Common myeloid progenitor, CD34-positive (primary cell): ENCODE measurements at regions of chr17 and their contacts with region 1.

Region 1: GRCh38 chr17:55273579-55274354 is 9.0 kb downstream of the HLF start:
- DNase-seq: peak in 1 of 3 donors; percentile 45
- H3K4me3 ChIP-seq: peak overlapping the region in 2 of 7 experiments; percentile 2 to 41
- H3K27ac ChIP-seq: no peak overlapping the region
- H3K4me1 ChIP-seq: peaks cover 3 to 88% (median 40%) of the 10 kb centered on the region in 4 experiments
- H3K27me3 ChIP-seq: no peaks in the 10 kb centered on the region

Region 2: DNA sequence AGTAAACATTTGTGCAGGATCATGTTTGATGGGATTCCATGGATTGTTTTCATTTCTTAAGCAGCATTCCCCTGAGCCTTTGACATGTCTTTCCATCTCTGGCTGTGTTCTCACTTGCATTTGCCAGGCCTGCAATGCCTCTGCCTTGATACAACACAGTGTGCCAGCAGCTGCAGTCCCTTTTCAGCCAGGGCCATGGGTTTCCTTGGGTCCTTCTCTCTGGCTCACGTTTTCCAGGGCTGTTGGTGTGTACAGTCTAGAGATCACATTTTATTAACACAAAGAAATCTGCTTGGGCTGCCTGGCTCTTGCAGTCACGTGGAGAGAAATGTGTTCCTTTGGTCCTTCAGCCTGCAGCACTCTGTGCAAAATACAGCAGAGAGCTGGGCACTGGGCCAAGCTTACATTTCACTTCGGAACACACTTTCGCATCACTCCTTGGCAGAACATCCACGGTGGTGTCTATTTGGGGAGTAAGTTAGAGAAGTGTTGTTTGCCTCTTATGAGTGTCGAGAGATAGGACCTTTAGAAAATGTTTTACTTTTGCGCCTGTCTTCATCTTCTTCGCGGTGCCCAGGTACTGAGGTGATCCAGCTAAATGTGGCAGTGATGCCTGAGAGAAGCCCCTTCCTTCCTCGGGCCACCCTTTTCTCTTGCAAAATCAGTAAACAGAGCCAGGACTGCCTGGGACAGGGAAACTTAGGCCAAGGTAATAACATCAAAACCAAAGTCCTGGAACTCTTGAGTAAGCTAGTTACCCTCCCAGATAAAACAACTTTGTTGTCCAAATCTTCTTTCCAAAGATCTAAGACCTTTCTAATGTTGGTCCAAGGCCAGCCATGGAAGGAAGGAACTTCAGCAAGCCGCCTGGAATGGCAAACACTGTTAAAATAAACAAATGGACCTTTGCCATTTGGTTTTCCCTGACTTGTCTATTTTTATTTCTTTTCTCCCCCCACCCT is 11.9 kb after region 1 on chr17:
- CTCF ChIA-PET with region 1: interaction called, 33 read pairs
- POLR2A ChIA-PET with region 1: no interaction called
- DNase-seq: peak in 2 of 3 donors; percentile 60 to 68
- H3K4me3 ChIP-seq: peak overlapping the region in 3 of 7 experiments; percentile 1 to 30 (median 24)
- H3K27ac ChIP-seq: peak overlapping the region in 1 of 2 experiments; percentile 72
- H3K4me1 ChIP-seq: peaks cover 8 to 55% (median 31%) of the 10 kb centered on the region in 4 experiments
- H3K27me3 ChIP-seq: no peaks in the 10 kb centered on the region